Activated CD8-positive, alpha-beta T cell treated with anti-CD3 and anti-CD28 coated beads for 36 hours (primary cell): ENCODE measurements at regions of chr17 and their contacts with region 1.

Region 1: DNA sequence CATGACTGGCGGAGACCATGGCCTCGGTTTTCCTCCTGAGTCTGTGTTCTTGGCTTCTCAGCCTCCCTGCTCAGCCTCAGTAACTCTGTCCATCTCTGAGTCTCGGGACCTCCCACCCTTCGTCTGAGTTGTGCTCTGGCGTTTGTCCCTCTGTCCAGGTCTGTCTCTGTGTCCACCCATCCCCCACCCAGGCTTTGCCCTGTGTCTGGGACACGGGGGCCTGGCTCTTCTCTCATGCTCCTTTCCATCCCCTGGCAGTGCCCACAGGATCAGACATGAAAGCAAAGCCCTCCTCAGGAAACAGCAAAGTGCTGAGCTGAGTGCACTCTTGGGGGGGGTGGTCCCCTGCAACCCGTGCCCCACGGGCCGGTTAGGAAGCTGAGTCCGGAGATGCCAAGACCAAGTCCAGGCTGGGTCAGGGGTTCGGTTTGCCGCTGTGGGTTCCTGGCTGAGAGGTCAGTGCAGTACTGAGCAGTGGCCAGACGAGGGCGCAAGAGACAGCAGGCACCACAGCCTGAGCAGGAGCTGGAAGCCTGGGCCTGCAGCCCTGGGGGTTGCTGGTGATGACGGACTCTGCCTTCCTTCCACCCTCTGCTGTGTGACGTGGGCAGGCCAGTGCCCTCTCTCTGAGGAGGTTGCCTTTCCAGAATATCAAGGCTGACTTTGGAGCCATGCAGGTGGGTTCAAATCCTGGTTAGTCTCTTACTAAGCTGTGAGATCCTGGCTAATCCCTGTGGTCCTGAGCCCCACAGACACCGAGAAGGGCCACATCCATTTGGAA is 2.5 kb downstream of the P2RX1 start:
- DNase-seq: peak; percentile 90
- ATAC-seq: peak; percentile 66
- H3K4me3 Mint-ChIP-seq: peak overlapping the region; percentile 20
- H3K27ac Mint-ChIP-seq: peak overlapping the region; percentile 55
- H3K4me1 Mint-ChIP-seq: peaks cover 63% of the 10 kb centered on the region
- H3K27me3 Mint-ChIP-seq: no peaks in the 10 kb centered on the region
- CTCF ChIP-seq: peak; percentile 94

Region 2: DNA sequence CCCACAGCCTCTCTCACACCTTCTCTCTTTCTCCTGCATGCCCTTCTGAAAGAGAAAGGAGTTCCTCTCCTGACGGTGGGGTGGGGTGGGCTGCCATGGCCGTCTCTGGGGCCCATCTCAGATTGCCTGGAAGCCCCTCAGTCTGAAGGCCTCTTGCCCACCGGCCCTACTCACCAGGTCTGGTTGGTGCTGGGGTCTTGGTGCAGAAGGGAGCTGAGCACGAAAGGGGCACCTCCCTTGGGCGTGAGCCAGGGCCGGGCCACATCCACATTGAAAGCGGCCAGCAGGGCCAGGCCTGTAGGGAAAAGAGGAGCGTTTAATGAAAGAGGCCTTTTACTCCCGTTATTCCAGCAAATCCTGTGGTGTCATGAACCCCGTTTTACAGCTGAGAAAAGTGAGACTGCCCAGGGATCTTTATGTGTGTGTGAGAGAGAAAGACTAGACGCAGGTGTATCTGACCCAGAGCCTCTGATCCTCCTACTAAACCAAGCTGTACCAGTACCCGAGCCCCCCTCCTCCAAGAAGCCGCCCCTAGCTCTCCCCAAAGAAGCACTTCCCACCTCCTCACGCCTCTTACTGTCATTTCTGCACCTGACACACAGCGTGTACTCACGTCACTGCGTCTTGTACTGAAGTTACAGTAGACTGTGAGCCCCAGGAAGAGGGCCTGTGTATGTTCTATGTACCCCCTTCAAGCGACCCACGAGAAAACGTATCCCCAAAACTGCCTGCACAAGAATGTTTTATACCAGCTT is 136.2 kb before region 1 on chr17:
- CTCF ChIA-PET with region 1: no interaction called
- POLR2A ChIA-PET with region 1: no interaction called
- intact Hi-C with region 1: no loop called
- DNase-seq: no peak
- ATAC-seq: no peak
- H3K4me3 Mint-ChIP-seq: no peak overlapping the region
- H3K27ac Mint-ChIP-seq: no peak overlapping the region
- H3K4me1 Mint-ChIP-seq: peaks cover 3% of the 10 kb centered on the region
- H3K27me3 Mint-ChIP-seq: no peaks in the 10 kb centered on the region
- CTCF ChIP-seq: no peak

Region 3: DNA sequence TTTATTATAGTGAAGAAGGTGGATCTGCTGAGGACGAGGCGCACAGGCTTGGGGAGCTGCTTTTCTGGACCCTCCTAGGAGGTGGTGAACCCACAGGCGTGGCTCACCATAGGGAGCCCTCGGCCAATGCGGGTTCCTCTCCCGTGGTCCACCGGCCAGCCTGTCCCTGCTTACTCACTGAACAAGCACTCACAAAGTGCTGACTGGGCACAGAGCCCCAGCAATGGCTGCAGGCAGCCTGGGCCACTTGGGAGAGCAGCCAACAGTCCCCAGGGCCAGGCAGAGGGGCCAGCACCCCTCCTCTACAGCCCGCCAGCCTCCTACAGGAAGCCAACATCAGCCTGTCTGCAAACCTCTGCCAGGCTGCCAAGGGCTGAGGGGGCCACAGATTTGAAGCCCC is 48.5 kb before region 1 on chr17:
- CTCF ChIA-PET with region 1: interaction called, 22 read pairs
- POLR2A ChIA-PET with region 1: no interaction called
- intact Hi-C with region 1: no loop called
- DNase-seq: no peak
- ATAC-seq: no peak
- H3K4me3 Mint-ChIP-seq: no peak overlapping the region
- H3K27ac Mint-ChIP-seq: no peak overlapping the region
- H3K4me1 Mint-ChIP-seq: no peaks in the 10 kb centered on the region
- H3K27me3 Mint-ChIP-seq: no peaks in the 10 kb centered on the region
- CTCF ChIP-seq: no peak

Region 4: GRCh38 chr17:3965118-3965803 is 51.5 kb after region 1 on chr17:
- CTCF ChIA-PET with region 1: interaction called, 27 read pairs
- POLR2A ChIA-PET with region 1: interaction called, 6 read pairs
- intact Hi-C with region 1: loop called (anchors 2 kb)
- DNase-seq: peak; percentile 86
- ATAC-seq: peak; percentile 64
- H3K4me3 Mint-ChIP-seq: peak overlapping the region; percentile 86
- H3K27ac Mint-ChIP-seq: peak overlapping the region; percentile 91
- H3K4me1 Mint-ChIP-seq: peaks cover 37% of the 10 kb centered on the region
- H3K27me3 Mint-ChIP-seq: no peaks in the 10 kb centered on the region
- CTCF ChIP-seq: no peak

Region 5: GRCh38 chr17:4004517-4005295 is 91.0 kb after region 1 on chr17:
- CTCF ChIA-PET with region 1: interaction called, 98 read pairs
- POLR2A ChIA-PET with region 1: interaction called, 5 read pairs
- intact Hi-C with region 1: loop called (anchors 5 kb)
- DNase-seq: peak; percentile 62
- ATAC-seq: peak; percentile 93
- H3K4me3 Mint-ChIP-seq: no peak overlapping the region
- H3K27ac Mint-ChIP-seq: no peak overlapping the region
- H3K4me1 Mint-ChIP-seq: peaks cover 5% of the 10 kb centered on the region
- H3K27me3 Mint-ChIP-seq: no peaks in the 10 kb centered on the region
- CTCF ChIP-seq: peak; percentile 100